GM10248 (cell line): ENCODE measurements at regions of chr1 and their contacts with region 1.

Region 1: GRCh38 chr1:67524143-67525052 is 94.2 kb upstream of the SERBP1 start:
- DNase-seq: no peak
- CTCF ChIP-seq: no peak

Region 2: GRCh38 chr1:67418839-67419586 is 105.4 kb before region 1 on chr1:
- CTCF ChIA-PET with region 1: no interaction called
- POLR2A ChIA-PET with region 1: interaction called, 12 read pairs
- DNase-seq: no peak
- CTCF ChIP-seq: no peak

Region 3: DNA sequence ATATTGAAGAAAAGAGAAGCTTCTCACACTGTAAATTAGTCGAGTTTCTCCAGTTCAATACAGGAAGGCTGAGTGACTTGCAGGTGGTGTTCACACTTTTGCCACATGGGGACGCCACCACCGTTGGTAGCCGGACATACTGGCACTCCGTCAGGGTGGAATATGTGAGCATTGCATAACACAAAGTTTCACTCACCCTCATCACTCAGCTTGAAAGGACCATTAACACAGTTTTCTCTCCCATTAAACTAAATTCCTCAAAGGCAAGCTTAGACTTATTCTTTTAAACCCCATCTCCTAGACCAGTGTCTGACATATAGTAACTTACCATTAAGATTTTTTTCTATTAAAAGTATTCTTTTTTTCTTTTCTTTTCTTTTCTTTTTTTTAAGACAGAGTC is 11.1 kb after region 1 on chr1:
- CTCF ChIA-PET with region 1: interaction called, 13 read pairs
- POLR2A ChIA-PET with region 1: no interaction called
- DNase-seq: peak; percentile 43
- CTCF ChIP-seq: peak; percentile 50